ENCODE measurements at regions of chr11 and their contacts with region 1.

Region 1: GRCh38 chr11:128831174-128832120 is 35.6 kb downstream of the KCNJ1 start:
- DNase-seq: peak; percentile 91
- H3K4me3 ChIP-seq: peak overlapping the region; percentile 37
- H3K27ac ChIP-seq: peak overlapping the region; percentile 71
- H3K4me1 ChIP-seq: peaks cover 60% of the 10 kb centered on the region
- CTCF ChIP-seq: peak; percentile 99

Region 2: DNA sequence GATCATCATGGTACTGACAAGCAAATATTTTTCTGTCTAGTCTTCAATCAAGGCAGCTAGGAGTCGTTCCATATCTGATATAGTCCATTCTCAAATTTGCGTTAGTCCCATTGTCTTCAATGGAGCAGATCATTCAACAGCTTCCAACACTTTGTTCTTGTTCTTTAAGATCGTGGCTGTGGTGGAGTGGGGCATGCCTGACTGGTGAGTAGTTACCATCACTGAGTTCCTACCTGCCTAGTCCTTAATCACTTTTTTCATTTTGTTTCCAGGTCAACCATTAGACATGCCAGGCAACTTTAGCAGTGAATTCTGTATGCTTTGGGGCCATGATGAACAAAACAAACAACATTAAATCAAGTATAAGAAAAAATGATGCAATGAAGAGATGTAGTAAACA is 1137.8 kb before region 1 on chr11:
- CTCF ChIA-PET with region 1: no interaction called
- POLR2A ChIA-PET with region 1: no interaction called
- intact Hi-C with region 1: no loop called
- DNase-seq: no peak
- H3K4me3 ChIP-seq: no peak overlapping the region
- H3K27ac ChIP-seq: no peak overlapping the region
- H3K4me1 ChIP-seq: no peaks in the 10 kb centered on the region
- CTCF ChIP-seq: no peak

Region 3: DNA sequence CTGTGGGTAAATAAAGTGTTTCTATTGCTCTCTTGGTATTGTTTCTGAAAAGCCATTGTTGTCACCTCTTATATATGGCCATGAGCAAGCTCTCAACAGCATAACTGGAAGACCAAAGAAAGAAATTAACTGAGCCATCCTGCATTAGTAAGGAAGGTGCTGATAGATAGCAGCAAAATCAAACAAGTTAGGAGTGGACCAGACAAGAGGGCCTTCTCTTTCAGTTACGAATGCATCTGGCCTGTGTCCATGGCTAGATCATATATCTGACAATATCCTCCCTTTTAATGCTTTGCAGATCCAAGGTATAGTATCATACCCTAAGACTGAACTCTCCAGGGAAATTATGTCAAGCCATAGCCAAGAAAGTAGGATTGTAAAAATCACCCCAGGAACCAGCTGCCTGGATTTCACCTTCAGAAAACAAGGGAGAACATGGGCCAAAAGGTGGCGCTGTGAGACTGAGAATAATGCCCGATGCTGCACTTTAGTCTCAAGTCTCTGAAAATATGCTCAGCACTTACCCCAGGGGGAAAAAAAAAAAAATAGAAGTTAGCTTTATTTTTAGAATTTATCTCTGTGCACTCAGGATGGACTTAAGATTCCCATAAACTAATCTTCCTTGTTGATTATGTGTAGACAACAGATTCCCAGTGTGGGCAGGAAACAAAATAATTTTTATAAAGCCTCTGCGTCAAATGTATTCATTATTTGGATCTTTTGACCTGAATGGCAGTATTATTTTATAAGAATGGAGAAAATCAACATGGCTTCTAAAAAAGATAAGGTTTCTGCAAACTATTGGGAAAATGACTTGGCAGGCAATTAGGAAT is 659.2 kb before region 1 on chr11:
- CTCF ChIA-PET with region 1: interaction called, 3 read pairs
- POLR2A ChIA-PET with region 1: no interaction called
- intact Hi-C with region 1: loop called (anchors 1 kb)
- DNase-seq: peak; percentile 80
- H3K4me3 ChIP-seq: no peak overlapping the region
- H3K27ac ChIP-seq: no peak overlapping the region
- H3K4me1 ChIP-seq: no peaks in the 10 kb centered on the region
- CTCF ChIP-seq: peak; percentile 95

Region 4: DNA sequence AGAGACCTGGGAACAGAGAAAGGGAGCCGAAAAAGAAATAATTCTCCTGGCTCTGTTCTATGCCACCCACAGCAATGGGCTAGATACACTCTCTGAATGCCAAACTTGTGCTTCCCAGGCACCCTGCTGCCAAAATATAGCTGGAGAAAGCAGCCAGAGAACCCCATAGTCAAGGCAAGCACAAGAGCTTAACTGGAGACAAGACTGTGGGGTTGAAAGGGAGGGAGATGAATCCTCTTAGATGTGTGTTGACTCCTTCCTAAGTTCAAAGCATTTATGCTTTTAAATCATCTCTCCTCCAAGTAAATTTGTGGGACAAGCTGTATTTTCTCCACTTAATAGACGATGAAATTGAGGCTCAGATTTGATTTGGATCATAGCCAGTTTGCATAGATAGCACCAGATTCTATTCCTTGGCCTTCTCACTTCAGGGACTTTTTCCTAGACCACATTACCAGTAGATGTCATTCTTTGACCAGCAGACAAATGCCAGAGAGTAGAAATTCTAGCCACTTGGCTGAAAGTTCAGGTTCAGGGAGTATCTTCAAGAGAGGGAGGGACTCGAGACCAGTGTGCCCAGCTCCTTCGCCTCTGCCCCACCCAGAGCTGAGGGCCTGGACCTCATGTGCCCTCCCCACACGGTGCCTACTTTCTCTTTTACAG is 227.6 kb before region 1 on chr11:
- CTCF ChIA-PET with region 1: interaction called, 7 read pairs
- POLR2A ChIA-PET with region 1: interaction called, 3 read pairs
- intact Hi-C with region 1: loop called (anchors 1 kb)
- DNase-seq: peak; percentile 80
- H3K4me3 ChIP-seq: no peak overlapping the region
- H3K27ac ChIP-seq: peak overlapping the region; percentile 33
- H3K4me1 ChIP-seq: peaks cover 81% of the 10 kb centered on the region
- CTCF ChIP-seq: peak; percentile 77

Region 5: DNA sequence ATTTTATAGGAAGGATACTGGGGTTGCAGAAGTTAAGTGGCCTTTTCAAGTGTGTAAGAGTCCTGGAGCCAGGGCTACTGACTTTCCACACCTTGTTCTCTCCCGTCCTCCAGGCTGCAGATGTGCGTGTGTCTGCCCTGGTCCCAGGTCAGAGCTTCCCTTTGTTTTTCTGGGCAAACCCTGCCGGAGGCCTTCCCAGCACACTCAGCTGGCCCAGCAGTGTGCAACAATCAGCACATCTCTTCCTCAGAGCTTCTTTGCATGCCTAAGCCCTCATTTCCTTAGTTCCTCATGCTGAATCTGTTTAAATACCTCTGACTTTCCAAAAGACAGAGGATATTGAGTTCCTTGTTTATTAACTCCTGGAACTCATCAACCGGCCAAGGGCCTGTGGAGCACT is 44.9 kb before region 1 on chr11:
- CTCF ChIA-PET with region 1: no interaction called
- POLR2A ChIA-PET with region 1: no interaction called
- intact Hi-C with region 1: no loop called
- DNase-seq: no peak
- H3K4me3 ChIP-seq: no peak overlapping the region
- H3K27ac ChIP-seq: no peak overlapping the region
- H3K4me1 ChIP-seq: no peaks in the 10 kb centered on the region
- CTCF ChIP-seq: no peak

Region 6: DNA sequence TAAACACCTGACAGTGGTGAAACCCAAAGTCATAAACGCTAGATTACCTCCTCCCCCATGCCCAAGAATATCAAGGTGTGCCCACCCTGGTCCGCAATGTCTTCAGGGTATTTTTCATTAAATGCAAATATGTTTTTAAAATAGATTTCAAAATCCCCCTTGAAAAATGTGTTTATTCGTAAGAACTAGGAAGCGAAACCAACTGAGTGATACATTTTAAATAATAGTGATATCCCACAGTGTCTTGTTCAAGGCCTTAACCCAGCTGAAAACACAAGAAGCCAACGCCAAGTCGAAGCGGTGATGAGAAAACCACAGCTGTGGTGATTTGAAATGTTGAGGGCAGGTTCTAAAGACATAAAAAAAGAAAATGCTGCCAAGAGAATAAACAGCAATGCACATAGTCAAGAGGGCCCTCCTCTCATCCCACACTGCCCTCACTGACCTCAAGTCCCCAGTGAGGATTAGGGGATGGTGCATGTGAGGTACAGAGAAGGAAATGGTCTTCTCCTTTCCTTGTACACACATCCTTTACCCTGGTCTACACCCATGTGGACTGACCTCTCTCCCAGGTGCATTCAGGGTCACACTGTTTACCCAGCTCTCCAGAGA is 10.1 kb after region 1 on chr11:
- CTCF ChIA-PET with region 1: interaction called, 6 read pairs
- POLR2A ChIA-PET with region 1: interaction called, 12 read pairs
- intact Hi-C with region 1: no loop called
- DNase-seq: peak; percentile 84
- H3K4me3 ChIP-seq: peak overlapping the region; percentile 37
- H3K27ac ChIP-seq: peak overlapping the region; percentile 96
- H3K4me1 ChIP-seq: peaks cover 85% of the 10 kb centered on the region
- CTCF ChIP-seq: no peak

Region 7: GRCh38 chr11:128868841-128869580 is 37.6 kb after region 1 on chr11:
- CTCF ChIA-PET with region 1: no interaction called
- POLR2A ChIA-PET with region 1: no interaction called
- intact Hi-C with region 1: no loop called
- DNase-seq: peak; percentile 17
- H3K4me3 ChIP-seq: no peak overlapping the region
- H3K27ac ChIP-seq: no peak overlapping the region
- H3K4me1 ChIP-seq: no peaks in the 10 kb centered on the region
- CTCF ChIP-seq: no peak